Cardiac septum (tissue), 1 donor: ENCODE measurements at regions of chr3 and their contacts with region 1.

Region 1: GRCh38 chr3:177934001-177934891 is 602.0 kb upstream of the KCNMB2 start:
- DNase-seq: no peak

Region 2: DNA sequence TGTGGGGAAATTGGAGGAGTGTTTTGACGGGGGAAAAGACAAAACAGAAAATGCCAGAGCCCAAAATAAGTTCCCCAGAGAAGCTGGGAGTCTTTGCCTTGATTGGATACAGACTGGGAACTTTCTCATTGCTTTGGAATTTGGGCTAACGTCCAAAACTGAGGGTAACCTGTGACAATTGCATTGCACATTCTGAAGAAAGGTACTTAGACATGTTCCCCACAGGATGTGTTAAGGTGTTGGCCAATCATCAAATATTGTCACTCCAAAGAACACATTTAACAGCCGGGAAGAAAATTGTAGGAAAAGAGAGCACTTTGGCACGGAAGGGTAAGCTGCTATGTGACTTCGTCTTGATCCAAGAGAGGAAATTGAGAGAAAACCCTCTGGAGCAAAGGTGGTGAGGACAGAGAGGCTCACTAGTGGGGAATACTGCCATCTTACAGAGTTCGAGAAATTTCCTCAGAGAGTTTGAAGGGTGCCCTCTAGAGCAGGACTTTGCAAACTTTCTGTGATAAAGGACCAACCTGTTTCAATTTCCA is 117.5 kb before region 1 on chr3:
- intact Hi-C with region 1: loop called (anchors 5 kb)
- DNase-seq: no peak

Region 3: GRCh38 chr3:178334239-178334638 is 400.0 kb after region 1 on chr3:
- intact Hi-C with region 1: no loop called
- DNase-seq: no peak